ENCODE measurements at regions of chrX and their contacts with region 1.

Region 1: GRCh38 chrX:118847676-118848075 is 24.1 kb downstream of the ZCCHC12 start:
- DNase-seq: no peak
- ATAC-seq: peak in 2 of 4 donors; percentile 58 to 64
- H3K4me3 ChIP-seq: no peak overlapping the region
- H3K27ac ChIP-seq: no peak overlapping the region
- H3K4me1 ChIP-seq: peaks cover 0 to 3% (median 0%) of the 10 kb centered on the region in 12 donors
- H3K27me3 ChIP-seq: peaks cover 0 to 5% (median 0%) of the 10 kb centered on the region in 9 donors
- CTCF ChIP-seq: peak; percentile 46 to 70 (median 60)
- POLR2A ChIP-seq: no peak

Region 2: DNA sequence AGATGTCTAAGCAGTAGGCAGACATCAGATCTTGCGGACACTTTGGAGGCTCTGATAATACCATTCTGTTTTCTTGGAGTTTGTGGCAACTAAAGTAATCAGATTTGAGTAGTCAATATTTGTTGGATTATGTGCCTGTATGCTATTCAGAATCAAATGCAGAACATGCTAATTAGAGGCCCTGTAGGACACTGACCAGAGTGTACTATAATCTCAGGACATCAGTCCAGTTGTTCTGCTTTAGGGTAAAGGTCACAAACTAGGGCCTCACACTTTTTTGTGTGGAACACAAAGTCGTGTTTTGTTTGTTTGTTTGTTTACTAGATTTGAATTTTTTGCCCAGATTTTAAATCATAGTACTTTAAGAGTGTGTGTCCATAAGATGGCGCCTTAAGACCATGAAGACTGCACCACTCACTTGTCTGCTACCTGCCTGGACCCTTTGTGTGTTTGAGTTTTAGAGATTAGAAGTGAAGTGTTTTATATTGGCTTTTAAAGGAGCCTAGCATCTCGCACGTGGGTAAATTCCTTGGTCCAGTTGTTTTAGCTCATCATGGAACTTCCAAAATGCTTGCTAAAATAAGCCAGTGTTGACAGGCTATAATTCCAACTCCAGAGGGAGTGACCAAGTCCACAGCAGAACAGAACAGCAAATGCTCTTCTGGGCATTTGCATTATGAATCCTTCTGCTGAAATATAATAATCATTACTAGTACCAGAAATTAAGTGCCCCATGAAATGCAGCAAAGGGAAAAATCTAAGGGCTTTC is 85.6 kb before region 1 on chrX:
- intact Hi-C with region 1: no loop called
- DNase-seq: no peak
- ATAC-seq: no peak
- H3K4me3 ChIP-seq: no peak overlapping the region
- H3K27ac ChIP-seq: no peak overlapping the region
- H3K4me1 ChIP-seq: no peaks in the 10 kb centered on the region
- H3K27me3 ChIP-seq: no peaks in the 10 kb centered on the region
- CTCF ChIP-seq: no peak
- POLR2A ChIP-seq: no peak

Region 3: DNA sequence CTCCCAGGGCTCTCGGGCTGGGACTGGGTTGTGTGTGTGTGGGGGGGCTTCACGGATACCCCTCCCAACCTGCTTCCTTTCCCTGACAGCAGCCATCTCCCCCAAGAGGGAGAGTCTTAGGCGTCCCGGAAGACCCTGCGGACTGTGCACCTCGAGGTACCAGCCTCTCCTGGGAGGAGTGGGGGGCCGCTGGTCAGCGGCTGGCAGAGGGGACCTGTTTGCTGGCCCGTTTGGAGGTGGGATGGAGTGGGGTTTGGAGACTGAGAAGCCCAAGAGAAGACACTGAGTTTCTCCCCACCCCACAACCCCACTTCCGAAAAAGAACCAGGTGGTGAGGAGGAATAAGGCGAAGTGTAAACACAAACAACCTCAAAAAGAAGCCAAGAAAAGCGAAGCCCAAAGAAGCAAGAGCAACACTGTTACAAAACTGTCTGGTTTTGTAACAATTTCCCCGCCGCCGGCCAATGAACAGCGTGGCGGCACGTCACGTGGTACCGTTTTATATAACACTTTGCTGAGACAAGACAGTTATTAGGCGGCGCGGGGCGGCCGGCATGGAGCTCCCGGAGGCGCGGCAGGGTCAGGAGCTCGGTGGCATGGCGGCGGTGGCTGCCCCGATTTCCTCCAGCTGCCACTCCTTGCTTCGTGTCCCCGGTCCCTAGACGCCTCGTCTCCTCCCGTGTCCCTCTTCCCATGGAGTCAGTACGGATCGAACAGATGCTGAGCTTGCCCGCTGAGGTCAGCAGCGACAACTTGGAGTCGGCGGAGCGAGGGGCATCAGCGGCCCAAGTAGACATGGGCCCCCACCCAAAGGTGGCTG is 126.6 kb after region 1 on chrX and contains the start of gene LONRF3:
- intact Hi-C with region 1: loop called in 1 of 10 experiments (anchors 10 kb)
- DNase-seq: peak; percentile 66 to 84 (median 68)
- ATAC-seq: peak; percentile 43 to 77 (median 56)
- H3K4me3 ChIP-seq: peak within 1 kb of the TSS; percentile 23 to 78 (median 60)
- H3K27ac ChIP-seq: peak within 1 kb of the TSS in 11 of 12 donors; percentile 36 to 87 (median 62)
- H3K4me1 ChIP-seq: peaks cover 0 to 21% (median 1%) of the 10 kb centered on the region in 12 donors
- H3K27me3 ChIP-seq: peaks cover 0 to 20% (median 0%) of the 10 kb centered on the region in 9 donors
- CTCF ChIP-seq: no peak
- POLR2A ChIP-seq: peak in 1 of 2 donors; percentile 78
- total RNA-seq, gene LONRF3: 1.3 to 8.3 (median 2.1) TPM

Region 4: DNA sequence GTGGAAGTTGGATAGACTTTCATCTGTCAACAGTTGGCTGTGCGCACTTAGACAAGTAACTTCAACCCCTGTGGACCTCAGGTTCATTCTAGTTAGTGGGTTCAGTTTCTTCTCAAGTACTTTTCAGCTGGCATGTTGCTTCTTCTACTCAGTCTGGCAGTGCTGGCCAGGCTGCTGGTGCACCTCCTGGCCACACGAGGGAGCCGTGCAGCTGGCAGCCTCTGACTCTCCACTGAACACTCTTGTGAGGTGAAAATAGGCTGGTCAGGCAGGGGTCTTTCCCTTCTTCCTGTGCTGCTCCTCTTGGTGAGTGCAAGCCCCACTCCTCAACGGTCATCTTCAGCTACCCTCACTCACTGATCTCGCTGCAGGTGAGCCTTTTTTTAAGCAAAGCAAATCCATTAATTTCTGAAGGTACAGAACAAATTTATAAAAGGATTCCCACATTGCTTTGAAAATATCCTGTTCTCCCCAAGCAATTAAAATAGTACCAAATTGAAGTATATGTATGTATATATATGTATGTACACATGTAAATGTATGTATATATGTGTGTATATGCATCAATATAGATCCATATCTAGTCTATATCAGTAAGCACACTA is 157.3 kb after region 1 on chrX:
- intact Hi-C with region 1: loop called (anchors 1 to 5 kb)
- DNase-seq: peak; percentile 25 to 72 (median 39)
- ATAC-seq: peak in 3 of 4 donors; percentile 72 to 83 (median 79)
- H3K4me3 ChIP-seq: no peak overlapping the region
- H3K27ac ChIP-seq: no peak overlapping the region
- H3K4me1 ChIP-seq: peaks cover 0 to 18% (median 0%) of the 10 kb centered on the region in 12 donors
- H3K27me3 ChIP-seq: peaks cover 0 to 9% (median 0%) of the 10 kb centered on the region in 9 donors
- CTCF ChIP-seq: peak; percentile 62 to 92 (median 76)
- POLR2A ChIP-seq: no peak

Region 5: DNA sequence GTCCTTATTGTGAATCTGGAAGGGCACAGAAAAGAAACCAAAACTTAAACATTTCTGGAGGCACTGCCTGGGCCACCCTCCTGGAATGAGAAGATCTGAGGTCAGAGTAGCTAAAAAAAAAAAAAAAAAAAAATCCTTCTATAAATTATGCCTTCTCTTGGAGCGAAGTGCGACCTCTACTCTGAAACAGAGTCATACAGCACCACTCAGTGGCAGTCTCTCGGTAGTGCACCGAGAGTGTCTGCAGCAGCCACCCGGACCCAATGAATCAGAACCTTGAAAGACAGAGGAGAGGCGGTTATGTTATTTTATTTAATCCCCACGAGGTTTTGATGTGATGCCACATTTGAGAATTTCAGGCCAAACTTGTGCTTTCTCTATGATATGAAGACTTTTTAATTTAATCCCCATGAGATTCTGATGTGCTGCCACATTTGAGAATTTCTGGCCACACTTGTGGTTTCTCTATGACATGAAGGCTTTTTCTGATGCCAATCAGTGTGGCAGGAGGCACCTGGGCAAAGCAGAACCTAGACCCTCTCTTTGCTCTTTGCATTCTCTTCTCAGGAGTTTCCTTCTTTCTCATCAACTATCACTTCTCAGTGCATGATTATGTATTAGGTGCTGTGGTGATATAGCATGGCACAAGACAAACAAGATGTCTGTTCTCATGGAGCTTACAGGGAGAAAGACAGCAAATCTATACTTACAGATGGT is 219.5 kb after region 1 on chrX:
- intact Hi-C with region 1: loop called (anchors 1 to 5 kb)
- DNase-seq: peak in 4 of 5 donors; percentile 18 to 48 (median 36)
- ATAC-seq: peak in 3 of 4 donors; percentile 72 to 80 (median 79)
- H3K4me3 ChIP-seq: no peak overlapping the region
- H3K27ac ChIP-seq: no peak overlapping the region
- H3K4me1 ChIP-seq: peaks cover 0 to 6% (median 0%) of the 10 kb centered on the region in 12 donors
- H3K27me3 ChIP-seq: peaks cover 0 to 12% (median 0%) of the 10 kb centered on the region in 9 donors
- CTCF ChIP-seq: peak; percentile 39 to 70 (median 60)
- POLR2A ChIP-seq: no peak

Region 6: GRCh38 chrX:119194621-119195020 is 346.9 kb after region 1 on chrX:
- intact Hi-C with region 1: loop called in 1 of 10 experiments (anchors 10 kb)
- DNase-seq: no peak
- ATAC-seq: no peak
- H3K4me3 ChIP-seq: no peak overlapping the region
- H3K27ac ChIP-seq: no peak overlapping the region
- H3K4me1 ChIP-seq: no peaks in the 10 kb centered on the region
- H3K27me3 ChIP-seq: no peaks in the 10 kb centered on the region
- CTCF ChIP-seq: peak in 6 of 12 donors; percentile 8 to 37 (median 28)
- POLR2A ChIP-seq: no peak

Region 7: GRCh38 chrX:119228512-119229252 is 381.0 kb after region 1 on chrX:
- intact Hi-C with region 1: loop called in 1 of 10 experiments (anchors 10 kb)
- DNase-seq: no peak
- ATAC-seq: no peak
- H3K4me3 ChIP-seq: no peak overlapping the region
- H3K27ac ChIP-seq: no peak overlapping the region
- H3K4me1 ChIP-seq: no peaks in the 10 kb centered on the region
- H3K27me3 ChIP-seq: peaks cover 0 to 11% (median 0%) of the 10 kb centered on the region in 9 donors
- CTCF ChIP-seq: no peak
- POLR2A ChIP-seq: no peak